ENCODE measurements at regions of chr9 and their contacts with region 1.

Region 1: DNA sequence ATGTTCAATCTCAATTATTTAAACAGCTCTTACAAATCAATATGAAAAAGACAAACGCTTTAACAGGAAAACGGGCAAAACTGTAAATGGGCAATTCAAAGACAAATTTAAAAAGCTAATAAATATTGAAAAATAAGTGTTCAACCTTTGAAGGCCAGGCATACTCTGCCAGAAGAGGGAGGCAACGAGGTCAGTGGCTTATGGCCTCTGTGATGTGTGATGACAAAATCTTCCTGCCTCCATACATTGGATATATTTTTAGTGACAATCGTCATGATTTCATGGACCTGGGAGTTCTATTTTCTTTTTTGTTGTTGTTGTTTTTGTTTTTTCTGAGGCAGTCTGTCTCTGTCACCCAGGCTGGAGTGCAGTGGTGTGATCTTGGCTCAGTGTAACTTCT is 131.2 kb upstream of the ERCC6L2 start:
- DNase-seq: no peak
- ATAC-seq: no peak
- H3K4me3 ChIP-seq: no peak overlapping the region
- H3K27ac ChIP-seq: no peak overlapping the region
- H3K4me1 ChIP-seq: no peaks in the 10 kb centered on the region
- H3K27me3 ChIP-seq: no peaks in the 10 kb centered on the region

Region 2: GRCh38 chr9:95808011-95808410 is 63.7 kb after region 1 on chr9:
- intact Hi-C with region 1: loop called in 1 of 4 experiments (anchors 10 kb)
- DNase-seq: no peak
- ATAC-seq: no peak
- H3K4me3 ChIP-seq: no peak overlapping the region
- H3K27ac ChIP-seq: no peak overlapping the region
- H3K4me1 ChIP-seq: no peaks in the 10 kb centered on the region
- H3K27me3 ChIP-seq: no peaks in the 10 kb centered on the region

Region 3: DNA sequence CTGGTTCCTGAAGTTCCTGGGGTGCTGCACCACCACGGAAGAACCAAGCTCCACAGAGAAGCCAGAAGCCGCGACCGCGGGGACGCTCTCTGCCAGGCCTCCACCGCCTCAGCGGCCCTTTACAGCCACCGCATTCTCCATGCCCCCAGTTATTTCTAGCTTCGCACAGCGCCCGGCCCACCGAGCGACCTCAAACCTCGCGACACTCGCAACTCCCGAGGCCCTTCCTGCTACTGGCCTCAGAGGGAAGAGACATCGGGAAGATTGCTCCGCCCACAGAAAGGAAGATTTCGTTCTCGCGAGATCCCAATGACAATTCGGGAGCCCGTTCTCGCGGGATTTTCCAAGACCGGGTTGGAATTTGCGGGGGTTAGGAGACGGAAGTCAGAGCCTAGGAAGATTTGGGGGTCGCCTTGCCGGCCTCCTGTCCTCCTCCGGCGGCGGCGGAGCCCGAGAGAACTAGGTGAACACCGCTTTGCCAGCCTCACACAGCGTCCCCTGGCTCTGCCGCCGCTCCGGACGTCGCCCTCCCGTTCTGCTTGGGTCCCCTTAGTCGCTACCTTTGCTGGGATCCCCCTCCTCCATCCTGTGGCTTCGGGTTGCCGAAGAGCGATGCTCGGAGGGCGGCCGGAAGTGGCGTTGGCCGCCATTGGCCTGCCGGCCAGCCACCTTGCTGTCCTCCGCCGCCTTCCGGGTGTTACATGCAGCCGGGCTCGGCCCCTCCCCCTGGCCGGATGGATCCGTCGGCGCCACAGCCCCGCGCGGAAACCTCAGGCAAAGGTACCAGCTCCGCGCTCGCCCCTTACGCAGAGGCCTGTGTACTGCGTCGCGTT is 131.2 kb after region 1 on chr9 and contains the start of gene ERCC6L2:
- intact Hi-C with region 1: no loop called
- DNase-seq: peak; percentile 96 to 98 (median 97)
- ATAC-seq: peak; percentile 98
- H3K4me3 ChIP-seq: no peak within 1 kb of the TSS
- H3K27ac ChIP-seq: peak within 1 kb of the TSS; percentile 98
- H3K4me1 ChIP-seq: peaks cover 3% of the 10 kb centered on the region
- H3K27me3 ChIP-seq: no peaks in the 10 kb centered on the region
- total RNA-seq, gene ERCC6L2: 27.9 to 41.0 (median 35.0) TPM